Calu3 (cell line): ENCODE measurements at regions of chr3 and their contacts with region 1.

Region 1: GRCh38 chr3:140499114-140499757 is 178.6 kb upstream of the TRIM42 start:
- DNase-seq: no peak
- H3K4me3 Mint-ChIP-seq: no peak overlapping the region
- H3K27ac Mint-ChIP-seq: no peak overlapping the region
- H3K4me1 Mint-ChIP-seq: no peaks in the 10 kb centered on the region
- H3K27me3 Mint-ChIP-seq: peaks cover 13% of the 10 kb centered on the region
- CTCF ChIP-seq: no peak

Region 2: DNA sequence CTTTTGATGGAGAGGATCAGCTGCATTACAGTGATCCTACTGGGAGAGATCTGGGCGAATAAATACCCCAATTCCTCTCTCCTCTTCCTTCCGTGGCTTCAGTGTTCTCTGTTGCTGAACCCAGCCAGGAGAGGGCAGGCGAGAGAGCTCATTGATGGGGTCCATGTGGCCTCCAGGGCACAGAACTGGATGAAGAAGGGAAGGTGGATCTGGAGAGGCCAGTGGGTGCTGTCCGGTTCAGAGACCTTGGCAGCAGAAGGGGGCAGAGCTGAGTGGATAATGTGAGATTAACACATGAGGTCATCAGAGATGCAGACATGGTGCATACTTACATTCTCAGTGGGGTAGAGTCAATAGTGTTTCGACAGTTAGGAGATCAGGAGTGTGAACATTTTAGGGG is 370.6 kb before region 1 on chr3:
- CTCF ChIA-PET with region 1: no interaction called
- intact Hi-C with region 1: loop called (anchors 1 kb)
- DNase-seq: peak; percentile 73
- H3K4me3 Mint-ChIP-seq: no peak overlapping the region
- H3K27ac Mint-ChIP-seq: no peak overlapping the region
- H3K4me1 Mint-ChIP-seq: no peaks in the 10 kb centered on the region
- H3K27me3 Mint-ChIP-seq: peaks cover 45% of the 10 kb centered on the region
- CTCF ChIP-seq: peak; percentile 83

Region 3: GRCh38 chr3:140308535-140308934 is 190.7 kb before region 1 on chr3:
- CTCF ChIA-PET with region 1: no interaction called
- intact Hi-C with region 1: no loop called
- DNase-seq: no peak
- H3K4me3 Mint-ChIP-seq: no peak overlapping the region
- H3K27ac Mint-ChIP-seq: no peak overlapping the region
- H3K4me1 Mint-ChIP-seq: no peaks in the 10 kb centered on the region
- H3K27me3 Mint-ChIP-seq: peaks cover 76% of the 10 kb centered on the region
- CTCF ChIP-seq: no peak

Region 4: GRCh38 chr3:140822401-140823047 is 323.3 kb after region 1 on chr3:
- CTCF ChIA-PET with region 1: no interaction called
- intact Hi-C with region 1: no loop called
- DNase-seq: no peak
- H3K4me3 Mint-ChIP-seq: no peak overlapping the region
- H3K27ac Mint-ChIP-seq: no peak overlapping the region
- H3K4me1 Mint-ChIP-seq: no peaks in the 10 kb centered on the region
- H3K27me3 Mint-ChIP-seq: peaks cover 24% of the 10 kb centered on the region
- CTCF ChIP-seq: no peak

Region 5: DNA sequence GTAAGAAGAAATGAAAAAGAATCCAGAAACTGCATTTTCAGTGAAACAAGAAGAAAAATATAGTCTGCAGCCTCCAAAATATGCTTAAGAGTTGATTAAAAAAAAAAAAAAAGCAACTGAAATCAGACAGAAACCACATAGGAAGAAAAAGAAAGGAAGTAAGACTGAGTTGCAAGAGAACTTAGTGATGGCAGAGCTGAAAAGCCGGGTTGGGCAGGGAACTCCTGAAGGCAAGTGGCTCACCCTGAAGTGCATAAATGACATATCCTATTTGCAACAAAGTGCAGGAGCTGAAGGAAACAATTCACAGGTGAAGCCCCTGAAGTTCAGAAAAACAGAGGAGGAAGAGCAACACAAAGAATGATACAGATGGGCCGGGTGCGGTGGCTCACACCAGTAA is 333.6 kb after region 1 on chr3:
- CTCF ChIA-PET with region 1: no interaction called
- intact Hi-C with region 1: no loop called
- DNase-seq: no peak
- H3K4me3 Mint-ChIP-seq: no peak overlapping the region
- H3K27ac Mint-ChIP-seq: no peak overlapping the region
- H3K4me1 Mint-ChIP-seq: no peaks in the 10 kb centered on the region
- H3K27me3 Mint-ChIP-seq: peaks cover 34% of the 10 kb centered on the region
- CTCF ChIP-seq: no peak

Region 6: DNA sequence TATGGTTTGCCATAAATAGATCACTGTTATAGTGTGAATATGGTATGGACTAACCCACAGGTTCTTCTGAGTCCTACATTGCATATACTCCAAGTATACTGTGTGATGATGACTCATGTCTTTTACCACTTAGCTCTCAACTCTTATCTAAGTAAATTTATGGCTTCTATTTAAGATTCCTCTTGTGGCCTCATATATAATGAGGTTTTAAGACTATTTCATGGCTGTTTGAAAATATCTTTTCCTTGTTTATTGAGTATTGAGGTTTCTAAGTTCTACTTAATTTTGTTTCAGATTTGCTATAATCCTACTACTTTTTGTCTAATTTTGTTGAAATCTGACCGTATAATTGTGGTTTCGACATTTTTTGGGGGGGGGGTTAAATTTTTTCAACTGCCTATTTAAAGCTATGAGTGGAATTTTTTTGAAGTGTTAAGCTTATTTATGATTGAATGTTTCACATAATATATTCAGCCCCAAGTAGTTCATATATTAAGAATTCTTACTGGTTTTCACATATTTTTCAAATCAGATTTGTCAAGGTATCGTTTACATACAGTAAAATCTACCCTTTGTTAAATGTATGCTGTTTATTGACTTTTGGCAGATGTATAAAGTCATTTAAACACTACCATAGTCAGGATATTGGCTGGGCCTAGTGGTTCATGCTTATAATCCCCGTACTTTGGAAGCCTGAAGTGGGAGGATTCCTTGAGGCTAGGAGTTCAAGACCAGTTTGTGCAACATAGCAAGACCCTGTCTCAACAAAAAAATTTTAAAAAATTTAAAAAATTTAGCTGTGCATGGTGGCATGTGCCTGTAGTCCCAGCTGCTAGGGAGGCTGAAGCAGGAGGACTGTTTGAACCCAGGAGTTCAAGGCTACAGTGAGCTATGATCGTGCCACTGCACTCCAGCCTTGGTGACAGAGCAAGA is 454.1 kb after region 1 on chr3:
- CTCF ChIA-PET with region 1: no interaction called
- intact Hi-C with region 1: no loop called
- DNase-seq: no peak
- H3K4me3 Mint-ChIP-seq: no peak overlapping the region
- H3K27ac Mint-ChIP-seq: peak overlapping the region; percentile 48
- H3K4me1 Mint-ChIP-seq: peaks cover 96% of the 10 kb centered on the region
- H3K27me3 Mint-ChIP-seq: no peaks in the 10 kb centered on the region
- CTCF ChIP-seq: no peak